ENCODE measurements at regions of chr6 and their contacts with region 1.

Region 1: GRCh38 chr6:26342106-26343004 is 22.6 kb upstream of the BTN3A2 start:
- DNase-seq: no peak
- ATAC-seq: peak; percentile 24
- H3K4me3 ChIP-seq: no peak overlapping the region
- H3K4me1 ChIP-seq: no peaks in the 10 kb centered on the region
- CTCF ChIP-seq: no peak

Region 2: GRCh38 chr6:25902071-25902470 is 440.3 kb before region 1 on chr6:
- intact Hi-C with region 1: no loop called
- DNase-seq: no peak
- ATAC-seq: no peak
- H3K4me3 ChIP-seq: no peak overlapping the region
- H3K4me1 ChIP-seq: no peaks in the 10 kb centered on the region
- CTCF ChIP-seq: no peak

Region 3: GRCh38 chr6:26596579-26597388 is 254.4 kb after region 1 on chr6 and contains the start of gene ABT1:
- intact Hi-C with region 1: loop called in 1 of 2 experiments (anchors 10 kb)
- DNase-seq: peak; percentile 98 to 100 (median 99)
- ATAC-seq: peak; percentile 98
- H3K4me3 ChIP-seq: peak within 1 kb of the TSS; percentile 69
- H3K4me1 ChIP-seq: peaks cover 5% of the 10 kb centered on the region
- CTCF ChIP-seq: no peak
- total RNA-seq, gene ABT1: 13.1 to 17.3 (median 13.6) TPM

Region 4: DNA sequence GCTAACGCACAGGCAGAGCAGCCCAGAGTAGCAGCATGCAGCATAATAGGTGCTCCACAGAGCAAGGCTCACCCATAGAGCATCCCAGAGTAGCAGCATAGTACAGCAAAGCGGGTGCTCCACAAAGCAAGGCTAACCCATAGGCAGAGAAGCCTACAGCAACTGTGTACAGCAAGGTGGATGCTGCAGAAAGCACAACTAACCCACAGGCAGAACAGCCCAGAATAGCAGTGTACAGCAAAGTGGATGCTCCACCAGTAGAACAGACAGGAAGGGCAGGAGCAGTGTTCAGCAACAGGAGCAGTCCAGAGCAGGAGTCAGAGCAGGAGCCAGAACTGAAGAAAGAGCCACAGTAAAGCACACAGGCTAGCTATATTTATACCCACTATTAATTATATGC is 772.4 kb after region 1 on chr6:
- intact Hi-C with region 1: no loop called
- DNase-seq: no peak
- ATAC-seq: no peak
- H3K4me3 ChIP-seq: no peak overlapping the region
- H3K4me1 ChIP-seq: no peaks in the 10 kb centered on the region
- CTCF ChIP-seq: no peak